Ovary (tissue), 10 donors: ENCODE measurements at regions of chr14 and their contacts with region 1.

Region 1: DNA sequence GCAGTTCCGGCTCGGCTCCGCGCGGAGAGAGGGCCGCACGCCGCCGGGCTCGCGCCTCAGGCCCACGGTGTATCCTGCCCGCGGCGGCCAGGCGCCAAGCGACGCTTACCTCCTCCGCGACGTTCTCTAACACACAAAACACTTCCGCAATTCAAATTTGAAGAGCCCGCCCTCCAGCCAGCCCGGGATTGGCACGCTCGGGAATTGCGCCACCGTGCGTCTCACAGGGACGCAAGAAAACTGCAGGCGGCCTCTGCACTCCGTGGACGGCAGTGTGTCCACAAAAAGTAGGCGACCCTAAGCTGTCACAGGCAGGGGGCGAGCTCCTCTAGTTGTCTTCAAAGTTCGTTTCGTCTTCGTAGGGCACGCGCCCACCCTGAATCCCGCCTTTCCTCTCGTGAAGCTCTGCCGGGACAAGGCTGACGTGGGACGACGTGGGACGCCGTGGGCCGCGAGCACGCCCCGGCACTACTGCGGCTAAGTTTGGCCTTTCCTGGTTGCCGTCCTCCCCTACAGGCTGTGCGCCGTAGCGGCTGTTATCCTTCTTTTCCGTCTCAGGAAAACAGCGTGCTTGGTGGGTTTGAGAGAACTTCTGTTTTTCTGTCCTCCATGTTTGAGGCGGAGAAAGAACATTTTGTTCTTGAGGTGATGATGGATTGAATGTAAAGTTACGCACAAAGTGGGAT is at the start of gene MIS18BP1:
- DNase-seq: peak; percentile 93 to 96 (median 95)
- H3K4me3 ChIP-seq: peak within 1 kb of the TSS; percentile 61
- H3K27ac ChIP-seq: peak within 1 kb of the TSS; percentile 78 to 91
- H3K4me1 ChIP-seq: peaks cover 10% of the 10 kb centered on the region
- H3K27me3 ChIP-seq: no peaks in the 10 kb centered on the region
- CTCF ChIP-seq: peak; percentile 85 to 89 (median 88)
- EP300 ChIP-seq: no peak
- POLR2A ChIP-seq: peak; percentile 52
- total RNA-seq, gene MIS18BP1: 14.7 to 44.3 (median 20.8) TPM

Region 2: GRCh38 chr14:44339231-44339630 is 914.0 kb before region 1 on chr14:
- intact Hi-C with region 1: no loop called
- DNase-seq: no peak
- H3K4me3 ChIP-seq: no peak overlapping the region
- H3K27ac ChIP-seq: no peak overlapping the region
- H3K4me1 ChIP-seq: no peaks in the 10 kb centered on the region
- H3K27me3 ChIP-seq: no peaks in the 10 kb centered on the region
- CTCF ChIP-seq: no peak
- EP300 ChIP-seq: no peak
- POLR2A ChIP-seq: no peak

Region 3: DNA sequence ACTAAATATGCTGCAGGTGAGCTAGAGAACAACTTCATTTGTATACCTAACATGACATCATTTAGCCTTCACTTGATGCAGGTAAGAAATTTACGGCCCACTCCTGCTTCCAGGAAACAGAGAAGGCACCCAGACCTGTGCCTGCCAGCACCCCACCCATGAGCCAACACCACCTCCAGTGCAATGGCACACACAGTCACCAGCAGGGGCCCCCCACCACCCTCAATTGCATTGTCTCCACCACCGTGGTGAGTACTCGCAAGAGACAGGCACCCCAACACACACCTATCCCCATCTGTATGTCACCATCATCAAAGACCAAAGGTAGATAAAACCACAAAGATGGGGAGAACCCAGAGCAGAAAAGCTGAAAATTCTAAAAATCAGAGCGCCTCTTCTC is 399.1 kb before region 1 on chr14:
- intact Hi-C with region 1: no loop called
- DNase-seq: no peak
- H3K4me3 ChIP-seq: no peak overlapping the region
- H3K27ac ChIP-seq: no peak overlapping the region
- H3K4me1 ChIP-seq: no peaks in the 10 kb centered on the region
- H3K27me3 ChIP-seq: no peaks in the 10 kb centered on the region
- CTCF ChIP-seq: no peak
- EP300 ChIP-seq: no peak
- POLR2A ChIP-seq: no peak

Region 4: GRCh38 chr14:44897045-44897844 is 356.0 kb before region 1 on chr14:
- intact Hi-C with region 1: loop called in 1 of 4 experiments (anchors 5 kb)
- DNase-seq: peak; percentile 98 to 99 (median 99)
- H3K4me3 ChIP-seq: peak overlapping the region; percentile 90
- H3K27ac ChIP-seq: peak overlapping the region; percentile 97 to 99
- H3K4me1 ChIP-seq: no peaks in the 10 kb centered on the region
- H3K27me3 ChIP-seq: no peaks in the 10 kb centered on the region
- CTCF ChIP-seq: no peak
- EP300 ChIP-seq: no peak
- POLR2A ChIP-seq: peak; percentile 63

Region 5: GRCh38 chr14:44912041-44912869 is 341.0 kb before region 1 on chr14:
- intact Hi-C with region 1: loop called in 2 of 4 experiments (anchors 5 to 10 kb)
- DNase-seq: peak in 3 of 5 donors; percentile 20 to 41 (median 27)
- H3K4me3 ChIP-seq: peak overlapping the region; percentile 43
- H3K27ac ChIP-seq: no peak overlapping the region
- H3K4me1 ChIP-seq: peaks cover 3% of the 10 kb centered on the region
- H3K27me3 ChIP-seq: no peaks in the 10 kb centered on the region
- CTCF ChIP-seq: no peak
- EP300 ChIP-seq: no peak
- POLR2A ChIP-seq: no peak

Region 6: GRCh38 chr14:45135659-45136314 is 117.4 kb before region 1 on chr14 and contains the start of gene FANCM:
- intact Hi-C with region 1: loop called in 1 of 4 experiments (anchors 5 kb)
- DNase-seq: peak; percentile 89 to 95 (median 91)
- H3K4me3 ChIP-seq: peak within 1 kb of the TSS; percentile 64
- H3K27ac ChIP-seq: peak within 1 kb of the TSS in 1 of 2 donors; percentile 81
- H3K4me1 ChIP-seq: no peaks in the 10 kb centered on the region
- H3K27me3 ChIP-seq: no peaks in the 10 kb centered on the region
- CTCF ChIP-seq: no peak
- EP300 ChIP-seq: no peak
- POLR2A ChIP-seq: no peak
- total RNA-seq, gene FANCM: 4.4 to 9.1 (median 6.2) TPM